Activated B cell treated with CpG ODN at 0.5 μM for 24 hours (primary cell): ENCODE measurements at regions of chr20 and their contacts with region 1.

Region 1: DNA sequence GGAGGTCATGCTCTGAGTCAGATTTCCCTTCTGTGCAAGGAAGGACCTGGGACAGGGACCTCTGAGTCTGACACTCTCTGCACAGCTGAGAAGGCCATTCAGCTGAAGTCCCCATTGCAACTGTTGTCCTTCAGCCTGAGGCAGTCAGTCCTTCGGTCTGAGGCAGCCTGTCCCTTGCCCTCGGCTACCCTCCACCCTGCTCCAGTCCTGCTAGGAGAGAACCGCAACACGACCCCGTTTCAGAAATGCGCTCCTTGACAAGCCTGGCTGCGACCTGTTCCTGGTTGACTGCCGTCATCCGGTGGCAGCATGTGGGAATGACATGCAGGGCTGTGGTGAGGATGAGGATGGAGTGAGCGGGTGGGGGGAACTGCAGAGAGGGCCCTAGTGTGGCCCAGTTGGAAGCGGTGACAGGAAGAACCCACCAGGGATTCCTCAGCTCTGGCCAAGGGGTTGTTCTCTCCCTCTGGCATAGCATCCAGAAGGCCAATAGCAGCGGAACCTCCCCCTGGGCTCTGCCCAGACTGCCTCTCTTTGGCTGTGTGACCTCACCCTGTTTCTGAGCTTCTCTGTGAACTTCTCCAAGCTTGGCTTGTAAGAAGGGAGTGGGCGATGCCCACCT is 40.3 kb upstream of the ANGPT4 start:
- DNase-seq: peak; percentile 71
- ATAC-seq: peak; percentile 90
- H3K4me3 Mint-ChIP-seq: no peak overlapping the region
- H3K27ac Mint-ChIP-seq: no peak overlapping the region
- H3K4me1 Mint-ChIP-seq: peaks cover 2% of the 10 kb centered on the region
- H3K27me3 Mint-ChIP-seq: peaks cover 21% of the 10 kb centered on the region
- CTCF ChIP-seq: peak; percentile 49

Region 2: DNA sequence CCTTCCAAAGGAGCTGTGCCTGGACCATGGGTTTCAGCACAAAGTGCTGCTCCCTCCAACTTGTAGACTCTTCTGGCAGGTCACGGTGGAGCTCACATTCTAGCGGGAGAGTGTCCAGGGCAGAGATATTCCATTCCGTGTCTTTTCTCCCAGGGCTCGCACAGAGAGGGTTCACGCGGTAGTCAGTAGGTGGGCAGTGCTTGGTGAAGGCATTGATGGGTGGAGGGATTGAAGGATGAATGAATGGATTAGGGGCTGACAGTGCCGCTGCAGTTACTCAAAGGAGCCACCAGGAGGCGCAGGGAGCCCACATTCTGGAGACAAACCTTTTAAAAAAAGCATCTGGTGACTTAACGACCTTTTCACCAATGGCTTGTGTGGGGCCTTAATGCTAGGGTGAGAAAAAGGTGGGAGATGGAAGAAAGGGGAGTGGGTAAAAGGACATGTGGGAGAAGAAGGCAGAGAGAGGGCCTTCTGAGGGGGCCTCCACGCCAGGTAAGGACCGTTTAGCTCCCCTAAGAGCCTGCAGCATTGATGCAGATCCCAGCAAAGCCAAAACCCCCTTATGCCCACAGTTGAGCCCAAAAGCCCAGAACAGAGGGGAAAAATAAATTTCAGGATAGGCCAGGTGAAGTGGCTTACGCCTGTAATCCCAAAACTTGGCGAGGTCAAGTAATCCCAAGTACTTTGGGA is 140.4 kb before region 1 on chr20:
- CTCF ChIA-PET with region 1: interaction called, 222 read pairs
- POLR2A ChIA-PET with region 1: interaction called, 5 read pairs
- intact Hi-C with region 1: loop called (anchors 1 kb)
- DNase-seq: peak; percentile 58
- ATAC-seq: peak; percentile 82
- H3K4me3 Mint-ChIP-seq: no peak overlapping the region
- H3K27ac Mint-ChIP-seq: no peak overlapping the region
- H3K4me1 Mint-ChIP-seq: no peaks in the 10 kb centered on the region
- H3K27me3 Mint-ChIP-seq: peaks cover 27% of the 10 kb centered on the region
- CTCF ChIP-seq: no peak

Region 3: DNA sequence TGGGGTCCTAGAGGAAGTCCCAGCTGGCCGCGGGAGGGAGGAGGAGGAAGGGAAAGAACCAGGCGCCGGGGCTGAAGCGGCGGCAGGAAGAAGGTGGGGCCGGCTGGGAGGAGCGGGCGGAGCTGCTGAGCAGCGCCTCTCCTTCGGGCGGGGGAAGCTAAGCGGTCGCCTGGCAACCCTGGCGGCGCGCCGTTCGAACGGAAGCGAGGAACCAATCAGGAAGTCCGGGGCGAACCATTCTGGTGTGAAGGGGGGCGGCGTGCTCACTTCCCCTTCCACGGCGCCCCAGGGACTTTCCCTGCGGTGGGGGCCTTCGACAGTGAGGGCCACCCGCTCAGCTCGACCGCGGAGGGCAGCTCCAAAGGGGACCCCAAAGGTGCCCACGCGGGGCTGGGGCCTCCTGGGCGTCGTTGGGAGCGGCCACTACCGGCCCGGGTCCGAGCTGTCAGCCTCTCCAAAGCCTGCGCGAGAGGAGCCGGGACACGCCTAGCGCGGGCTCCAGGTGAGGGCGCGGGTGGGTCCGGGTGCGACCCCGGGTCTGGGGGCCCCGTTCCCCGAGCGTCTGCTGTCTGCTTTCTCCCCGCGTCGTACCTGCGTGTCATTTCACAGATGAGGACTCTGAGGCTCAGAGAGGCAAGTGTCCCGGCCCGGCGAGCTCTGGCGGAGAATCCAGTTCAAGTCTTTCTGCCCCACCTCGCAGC is 122.8 kb before region 1 on chr20 and contains the start of gene FAM110A:
- CTCF ChIA-PET with region 1: interaction called, 25 read pairs
- POLR2A ChIA-PET with region 1: no interaction called
- intact Hi-C with region 1: no loop called
- DNase-seq: peak; percentile 91
- ATAC-seq: peak; percentile 92
- H3K4me3 Mint-ChIP-seq: peak within 1 kb of the TSS; percentile 88
- H3K27ac Mint-ChIP-seq: peak within 1 kb of the TSS; percentile 81
- H3K4me1 Mint-ChIP-seq: peaks cover 44% of the 10 kb centered on the region
- H3K27me3 Mint-ChIP-seq: no peaks in the 10 kb centered on the region
- CTCF ChIP-seq: no peak
- total RNA-seq, gene FAM110A: 9.2 and 11.0 TPM in 2 replicates

Region 4: GRCh38 chr20:945841-946240 is 10.6 kb before region 1 on chr20:
- CTCF ChIA-PET with region 1: interaction called, 13 read pairs
- POLR2A ChIA-PET with region 1: no interaction called
- intact Hi-C with region 1: no loop called
- DNase-seq: no peak
- ATAC-seq: no peak
- H3K4me3 Mint-ChIP-seq: no peak overlapping the region
- H3K27ac Mint-ChIP-seq: no peak overlapping the region
- H3K4me1 Mint-ChIP-seq: no peaks in the 10 kb centered on the region
- H3K27me3 Mint-ChIP-seq: peaks cover 15% of the 10 kb centered on the region
- CTCF ChIP-seq: no peak

Region 5: GRCh38 chr20:1108437-1108920 is 152.0 kb after region 1 on chr20:
- CTCF ChIA-PET with region 1: interaction called, 3 read pairs
- POLR2A ChIA-PET with region 1: no interaction called
- intact Hi-C with region 1: loop called (anchors 1 kb)
- DNase-seq: peak; percentile 36
- ATAC-seq: peak; percentile 78
- H3K4me3 Mint-ChIP-seq: no peak overlapping the region
- H3K27ac Mint-ChIP-seq: no peak overlapping the region
- H3K4me1 Mint-ChIP-seq: peaks cover 4% of the 10 kb centered on the region
- H3K27me3 Mint-ChIP-seq: peaks cover 4% of the 10 kb centered on the region
- CTCF ChIP-seq: no peak

Region 6: DNA sequence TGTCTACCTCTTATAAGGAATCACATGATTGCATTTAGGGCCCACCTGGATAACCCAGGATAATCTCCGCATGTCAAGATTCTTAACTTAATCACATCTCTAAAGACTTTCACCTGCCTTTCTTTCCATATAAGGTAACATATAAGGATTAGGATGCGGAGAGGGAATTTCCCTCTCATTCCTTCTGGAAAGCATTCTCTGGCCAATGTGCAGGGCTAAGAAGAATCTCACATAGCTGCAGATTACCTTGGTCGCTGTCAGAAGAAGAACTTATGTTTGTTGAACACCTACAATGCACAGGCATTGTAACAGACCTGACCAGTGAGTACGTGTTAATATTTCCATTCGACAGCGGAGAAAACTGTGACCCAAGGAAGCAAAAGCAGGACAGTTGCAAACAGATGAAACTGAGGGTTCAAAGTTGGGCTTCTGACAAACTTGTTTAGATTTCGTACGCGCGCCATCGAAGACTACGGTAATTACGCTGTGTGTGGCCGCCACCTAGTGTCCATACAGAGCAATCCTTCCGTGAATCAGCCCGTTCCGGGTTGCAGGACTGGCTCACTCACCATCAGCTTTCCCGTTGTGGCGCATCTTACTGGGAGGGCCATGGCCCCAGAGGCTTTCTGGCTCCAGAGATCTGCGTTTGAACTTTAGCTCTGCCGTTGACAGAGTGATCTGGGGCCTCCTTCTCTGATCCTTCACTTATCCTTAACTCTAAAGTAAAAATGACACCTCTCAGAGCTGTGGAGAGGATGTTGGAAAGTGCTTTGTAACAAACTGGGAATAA is 256.4 kb after region 1 on chr20:
- CTCF ChIA-PET with region 1: interaction called, 4 read pairs
- POLR2A ChIA-PET with region 1: no interaction called
- intact Hi-C with region 1: loop called (anchors 1 kb)
- DNase-seq: peak; percentile 22
- ATAC-seq: peak; percentile 91
- H3K4me3 Mint-ChIP-seq: no peak overlapping the region
- H3K27ac Mint-ChIP-seq: no peak overlapping the region
- H3K4me1 Mint-ChIP-seq: peaks cover 7% of the 10 kb centered on the region
- H3K27me3 Mint-ChIP-seq: peaks cover 46% of the 10 kb centered on the region
- CTCF ChIP-seq: peak; percentile 64